ENCODE measurements at regions of chr16 and their contacts with region 1.

Region 1: DNA sequence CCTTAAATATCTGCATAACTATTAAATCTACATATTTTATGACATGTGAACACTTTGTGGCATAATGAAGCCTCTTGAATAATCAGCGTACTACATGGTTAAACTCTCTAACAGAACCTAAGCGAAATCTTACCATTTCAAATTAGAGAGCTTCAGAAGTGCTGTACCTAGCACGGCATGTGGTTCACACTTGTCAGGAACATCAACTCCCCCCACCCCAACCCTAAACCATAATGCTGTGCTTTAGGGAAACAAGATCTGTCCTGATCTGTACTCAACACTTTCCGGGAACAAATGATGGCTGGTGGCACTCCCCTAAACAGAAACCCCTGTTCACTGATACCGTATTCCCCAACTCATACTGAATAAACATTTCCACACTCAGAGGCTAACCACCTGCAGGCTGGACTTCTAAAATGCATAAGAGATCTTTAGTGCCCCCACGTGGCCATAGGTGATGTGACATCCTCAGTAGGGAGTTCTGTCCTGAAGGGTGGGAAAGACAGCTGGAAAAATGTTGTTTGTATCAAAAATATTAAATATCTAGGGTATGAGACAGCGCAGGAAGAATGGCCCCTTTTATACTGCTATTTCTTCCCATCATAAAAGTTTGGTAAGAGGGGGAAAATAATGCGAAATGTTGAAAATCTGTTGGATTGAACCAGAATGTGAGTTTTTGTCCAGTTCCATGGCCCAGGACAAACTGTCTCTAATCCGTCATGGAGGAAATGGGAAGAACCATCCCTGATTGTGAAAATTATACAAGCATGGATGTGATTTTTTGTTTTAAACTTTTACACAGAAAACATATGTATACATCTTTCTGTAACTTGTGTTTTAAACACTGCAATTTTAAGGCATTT is 88.6 kb downstream of the USP31 start:
- DNase-seq: peak; percentile 47
- H3K4me3 ChIP-seq: no peak overlapping the region
- H3K27ac ChIP-seq: no peak overlapping the region
- H3K27me3 ChIP-seq: no peaks in the 10 kb centered on the region
- CTCF ChIP-seq: peak; percentile 88

Region 2: GRCh38 chr16:23072084-23072599 is 11.5 kb after region 1 on chr16:
- CTCF ChIA-PET with region 1: interaction called, 22 read pairs
- POLR2A ChIA-PET with region 1: no interaction called
- DNase-seq: peak; percentile 23
- H3K4me3 ChIP-seq: no peak overlapping the region
- H3K27ac ChIP-seq: no peak overlapping the region
- H3K27me3 ChIP-seq: no peaks in the 10 kb centered on the region
- CTCF ChIP-seq: no peak

Region 3: DNA sequence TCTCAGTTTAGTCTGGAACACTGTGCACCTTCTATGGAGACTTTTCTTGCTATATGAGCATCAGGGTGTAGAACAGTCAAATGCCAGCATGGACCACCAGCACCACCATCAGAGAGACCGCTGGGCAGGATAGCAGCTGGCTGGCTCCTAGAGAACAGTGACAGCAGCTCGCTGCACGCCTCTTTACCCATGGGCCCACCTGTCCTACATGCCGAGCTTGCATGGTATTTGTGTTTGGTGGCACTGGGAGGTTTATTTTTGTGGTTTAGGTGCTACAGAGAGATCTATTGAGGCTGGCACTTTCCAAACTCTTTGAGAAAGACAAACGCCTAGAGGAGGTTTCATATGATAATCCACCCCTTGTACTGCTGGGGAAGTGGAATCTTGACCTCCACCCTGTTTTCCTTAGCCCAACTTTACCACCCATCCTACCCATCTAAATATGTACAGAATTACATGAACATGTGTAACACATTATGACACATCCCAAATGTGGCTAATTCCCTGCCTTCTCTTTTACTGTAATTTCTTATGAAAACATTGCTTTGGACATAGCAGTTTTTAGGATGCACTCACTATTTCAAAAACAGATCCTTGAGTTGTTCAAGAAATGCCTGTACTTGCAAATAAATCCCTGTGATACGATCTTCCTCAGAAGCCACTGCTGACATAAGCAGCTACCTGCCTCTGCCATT is 346.0 kb after region 1 on chr16:
- CTCF ChIA-PET with region 1: no interaction called
- POLR2A ChIA-PET with region 1: no interaction called
- DNase-seq: no peak
- H3K4me3 ChIP-seq: no peak overlapping the region
- H3K27ac ChIP-seq: no peak overlapping the region
- H3K27me3 ChIP-seq: no peaks in the 10 kb centered on the region
- CTCF ChIP-seq: no peak

Measured in AG04450 (cell line).